ENCODE measurements at regions of chr19 and their contacts with region 1.

Region 1: GRCh38 chr19:48391107-48391986 is at the start of gene KDELR1:
- DNase-seq: peak; percentile 78 to 92 (median 80)
- ATAC-seq: peak; percentile 89 to 96 (median 93)
- H3K4me3 ChIP-seq: peak within 1 kb of the TSS; percentile 77 to 99 (median 90)
- H3K27ac ChIP-seq: peak within 1 kb of the TSS; percentile 67 to 97 (median 87)
- H3K4me1 ChIP-seq: peaks cover 0 to 28% (median 11%) of the 10 kb centered on the region in 12 donors
- H3K27me3 ChIP-seq: peaks cover 15 to 43% (median 35%) of the 10 kb centered on the region in 9 donors
- CTCF ChIP-seq: peak; percentile 85 to 97 (median 91)
- POLR2A ChIP-seq: peak in 1 of 2 donors; percentile 61
- total RNA-seq, gene KDELR1: 64.5 to 109 (median 79.1) TPM

Region 2: GRCh38 chr19:48363810-48364563 is 27.4 kb before region 1 on chr19 and contains the starts of genes SYNGR4 and TMEM143:
- intact Hi-C with region 1: loop called in 1 of 10 experiments (anchors 2 kb)
- DNase-seq: peak; percentile 99 to 100 (median 99)
- ATAC-seq: peak; percentile 95 to 97 (median 96)
- H3K4me3 ChIP-seq: peak within 1 kb of the TSS; percentile 57 to 85 (median 68)
- H3K27ac ChIP-seq: peak within 1 kb of the TSS; percentile 82 to 100 (median 95)
- H3K4me1 ChIP-seq: peaks cover 0 to 18% (median 5%) of the 10 kb centered on the region in 12 donors
- H3K27me3 ChIP-seq: no peaks in the 10 kb centered on the region
- CTCF ChIP-seq: no peak
- POLR2A ChIP-seq: peak in 1 of 2 donors; percentile 59
- total RNA-seq, gene SYNGR4: not detected
- total RNA-seq, gene TMEM143: 28.3 to 96.1 (median 66.2) TPM

Region 3: DNA sequence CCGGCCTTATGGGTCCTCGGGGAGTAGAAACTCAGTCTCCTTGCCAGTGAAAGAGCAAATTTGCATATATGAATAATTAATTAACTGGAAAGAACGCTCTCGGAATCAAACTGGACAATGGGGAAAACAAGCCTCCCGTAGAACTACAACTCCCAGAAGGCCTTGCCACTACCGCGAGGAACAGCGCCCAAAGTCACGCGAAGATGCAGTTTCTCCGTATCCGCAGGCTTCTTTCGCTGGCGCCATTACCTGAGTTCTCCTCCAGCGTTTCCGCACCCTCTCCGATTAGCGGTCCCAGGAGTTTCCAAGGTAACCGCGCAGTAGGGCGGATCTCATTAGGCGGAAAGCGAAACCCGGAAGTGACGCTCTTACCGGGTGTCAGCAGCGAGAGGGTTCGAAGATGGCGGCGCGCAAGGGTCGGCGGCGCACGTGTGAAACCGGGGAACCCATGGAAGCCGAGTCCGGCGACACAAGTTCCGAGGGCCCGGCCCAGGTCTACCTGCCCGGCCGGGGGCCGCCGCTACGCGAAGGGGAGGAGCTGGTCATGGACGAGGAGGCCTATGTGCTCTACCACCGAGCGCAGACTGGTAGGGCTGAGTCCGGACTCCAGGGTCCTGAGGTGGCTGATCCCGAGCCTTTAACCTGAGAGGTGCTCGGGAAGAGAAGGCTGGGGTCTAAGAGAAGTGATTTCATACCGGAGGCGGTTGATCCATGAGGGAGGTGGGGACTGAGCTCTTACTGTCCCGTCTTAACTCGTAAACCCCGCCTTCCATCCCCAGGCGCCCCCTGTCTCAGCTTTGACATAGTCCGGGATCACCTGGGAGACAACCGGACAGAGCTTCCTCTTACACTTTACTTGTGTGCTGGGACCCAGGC is 54.5 kb after region 1 on chr19 and contains the start of gene GRWD1:
- intact Hi-C with region 1: loop called in 2 of 10 experiments (anchors 2 to 5 kb)
- DNase-seq: peak; percentile 88 to 93 (median 91)
- ATAC-seq: peak; percentile 88 to 95 (median 91)
- H3K4me3 ChIP-seq: peak within 1 kb of the TSS; percentile 60 to 98 (median 89)
- H3K27ac ChIP-seq: peak within 1 kb of the TSS; percentile 12 to 94 (median 88)
- H3K4me1 ChIP-seq: peaks cover 0 to 27% (median 19%) of the 10 kb centered on the region in 12 donors
- H3K27me3 ChIP-seq: peaks cover 4 to 28% (median 15%) of the 10 kb centered on the region in 9 donors
- CTCF ChIP-seq: peak in 2 of 12 donors; percentile 3 to 7
- POLR2A ChIP-seq: peak in 1 of 2 donors; percentile 47
- total RNA-seq, gene GRWD1: 13.9 to 24.7 (median 19.0) TPM

Region 4: GRCh38 chr19:48492925-48493717 is 101.8 kb after region 1 on chr19:
- intact Hi-C with region 1: loop called in 1 of 10 experiments (anchors 5 kb)
- DNase-seq: peak; percentile 95 to 97 (median 97)
- ATAC-seq: peak; percentile 89 to 92 (median 90)
- H3K4me3 ChIP-seq: peak overlapping the region; percentile 23 to 78 (median 61)
- H3K27ac ChIP-seq: peak overlapping the region in 11 of 12 donors; percentile 29 to 77 (median 66)
- H3K4me1 ChIP-seq: peaks cover 0 to 39% (median 10%) of the 10 kb centered on the region in 12 donors
- H3K27me3 ChIP-seq: peaks cover 0 to 32% (median 1%) of the 10 kb centered on the region in 9 donors
- CTCF ChIP-seq: no peak
- POLR2A ChIP-seq: peak in 1 of 2 donors; percentile 63